ENCODE measurements at regions of chr3 and their contacts with region 1.

Region 1: GRCh38 chr3:159763602-159764489 is 224.8 kb upstream of the IL12A start:
- DNase-seq: peak; percentile 92

Region 2: GRCh38 chr3:159616212-159616825 is 147.5 kb before region 1 on chr3:
- intact Hi-C with region 1: loop called (anchors 1 kb)
- DNase-seq: no peak

Region 3: DNA sequence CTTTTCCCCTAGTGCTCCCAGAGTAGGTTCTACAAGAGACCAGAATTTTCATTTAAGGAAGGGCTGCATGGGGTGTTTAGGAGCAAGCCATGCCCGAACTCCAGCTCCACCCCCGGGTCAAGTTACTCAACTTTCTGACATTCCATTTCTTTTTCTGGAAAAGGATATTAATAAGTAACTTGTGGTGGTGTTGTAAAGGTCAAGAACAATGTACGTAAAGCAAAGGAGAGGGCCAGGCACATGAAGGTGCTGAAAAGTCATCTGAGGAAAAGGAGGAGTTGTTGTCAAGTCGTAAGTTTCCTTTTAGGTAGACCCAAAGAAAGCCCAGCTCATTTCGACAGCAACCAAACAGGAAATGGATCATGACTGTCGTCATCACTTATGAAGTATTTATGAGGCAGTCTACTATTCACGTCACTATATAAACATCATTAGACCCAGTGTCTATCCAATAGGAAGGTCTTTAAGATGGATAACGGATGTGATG is 94.8 kb before region 1 on chr3:
- intact Hi-C with region 1: loop called (anchors 2 kb)
- DNase-seq: no peak

Region 4: GRCh38 chr3:159711560-159712333 is 52.1 kb before region 1 on chr3:
- intact Hi-C with region 1: loop called (anchors 2 kb)
- DNase-seq: peak; percentile 77

Region 5: GRCh38 chr3:159732172-159733111 is 31.4 kb before region 1 on chr3:
- intact Hi-C with region 1: no loop called
- DNase-seq: no peak

Region 6: GRCh38 chr3:159796744-159797143 is 32.9 kb after region 1 on chr3:
- intact Hi-C with region 1: loop called (anchors 2 kb)
- DNase-seq: no peak

Region 7: DNA sequence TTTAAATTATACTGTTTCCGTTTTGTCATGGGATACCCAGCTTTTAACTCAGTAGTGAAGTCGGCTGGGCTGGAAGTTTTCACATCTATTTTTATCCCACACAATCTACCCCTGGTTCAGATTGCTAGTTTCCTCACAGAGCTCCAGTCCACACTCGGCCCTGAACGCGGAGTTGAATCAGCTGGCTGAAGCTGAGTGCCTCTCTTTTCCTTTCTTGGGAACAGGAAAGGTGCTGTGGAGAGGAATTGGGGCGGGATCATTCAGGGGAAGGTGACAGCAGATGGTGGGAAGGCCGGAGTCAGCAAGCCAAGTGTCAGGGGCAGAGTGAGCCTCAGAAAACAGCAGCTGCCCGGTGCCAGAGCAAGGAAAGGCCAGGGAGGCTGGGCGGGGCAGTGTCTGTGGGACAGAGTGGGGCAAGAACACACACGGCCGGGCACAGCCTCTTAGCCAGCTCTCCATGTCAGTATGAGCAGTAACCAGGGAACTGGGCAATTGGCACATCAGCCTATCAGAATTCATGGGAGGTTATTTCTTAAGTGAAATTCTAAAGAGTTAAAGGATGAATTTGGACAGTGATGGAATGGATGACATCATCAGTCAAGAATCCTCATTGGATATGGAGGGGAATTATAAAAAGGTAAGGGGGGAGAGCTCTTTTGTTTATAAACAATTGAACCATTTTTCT is 89.1 kb after region 1 on chr3:
- intact Hi-C with region 1: loop called (anchors 2 kb)
- DNase-seq: peak; percentile 91

Region 8: DNA sequence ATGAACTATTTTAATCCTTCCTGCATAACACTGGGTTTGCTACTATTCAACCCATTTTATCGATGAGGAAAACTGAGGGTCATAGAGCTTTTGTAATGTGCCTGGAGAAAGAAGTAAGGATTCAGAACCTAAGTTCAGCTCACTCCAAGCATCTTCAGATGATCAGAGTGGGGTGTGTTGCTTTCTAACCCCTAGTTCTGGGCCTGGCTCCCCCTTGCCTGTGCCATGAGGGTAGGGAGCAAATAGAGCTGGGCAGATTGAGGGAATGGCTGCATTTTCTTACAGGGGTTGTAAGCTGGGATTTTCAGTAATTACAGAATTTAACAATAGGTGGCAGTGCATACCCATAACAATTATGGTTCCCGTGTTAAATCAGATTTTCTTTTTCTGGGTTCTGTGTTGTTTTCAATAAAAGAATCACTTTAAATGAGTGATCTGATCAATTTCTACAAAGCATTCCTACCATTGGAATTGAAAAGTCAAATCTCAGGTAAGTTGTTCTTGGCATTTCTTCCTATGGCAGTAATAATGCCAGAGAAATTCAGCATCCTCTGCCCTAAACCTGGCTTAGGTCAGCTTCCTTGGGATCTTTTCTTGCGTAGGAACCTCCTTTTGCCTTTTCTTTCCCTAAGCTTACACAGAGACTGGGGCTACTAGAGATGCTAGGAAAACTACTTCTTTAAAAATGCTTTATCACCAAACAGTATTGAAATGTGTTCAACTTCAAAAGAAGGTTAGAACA is 121.0 kb after region 1 on chr3:
- intact Hi-C with region 1: loop called (anchors 10 kb)
- DNase-seq: no peak